ENCODE measurements at regions of chr19 and their contacts with region 1.

Region 1: GRCh38 chr19:46661020-46661731 is at the start of gene DACT3:
- DNase-seq: peak; percentile 100
- ATAC-seq: peak; percentile 92 to 94
- H3K4me3 ChIP-seq: peak within 1 kb of the TSS; percentile 61 to 79 (median 71)
- H3K27ac ChIP-seq: peak within 1 kb of the TSS; percentile 76 to 86 (median 79)
- H3K4me1 ChIP-seq: peaks cover 17 to 18% of the 10 kb centered on the region in 2 donors
- H3K27me3 ChIP-seq: peaks cover 14 to 20% (median 16%) of the 10 kb centered on the region in 3 donors
- CTCF ChIP-seq: no peak
- POLR2A ChIP-seq: no peak
- total RNA-seq, gene DACT3: 0.26 to 1.0 (median 0.39) TPM

Region 2: GRCh38 chr19:46529622-46530462 is 131.3 kb before region 1 on chr19:
- in situ Hi-C with region 1: loop called in 1 of 4 experiments (anchors 10 kb)
- intact Hi-C with region 1: no loop called
- DNase-seq: peak; percentile 34 to 47
- ATAC-seq: peak; percentile 30 to 54
- H3K4me3 ChIP-seq: no peak overlapping the region
- H3K27ac ChIP-seq: no peak overlapping the region
- H3K4me1 ChIP-seq: no peaks in the 10 kb centered on the region
- H3K27me3 ChIP-seq: peaks cover 11 to 19% (median 11%) of the 10 kb centered on the region in 3 donors
- CTCF ChIP-seq: peak; percentile 77 to 86 (median 83)
- POLR2A ChIP-seq: no peak

Region 3: DNA sequence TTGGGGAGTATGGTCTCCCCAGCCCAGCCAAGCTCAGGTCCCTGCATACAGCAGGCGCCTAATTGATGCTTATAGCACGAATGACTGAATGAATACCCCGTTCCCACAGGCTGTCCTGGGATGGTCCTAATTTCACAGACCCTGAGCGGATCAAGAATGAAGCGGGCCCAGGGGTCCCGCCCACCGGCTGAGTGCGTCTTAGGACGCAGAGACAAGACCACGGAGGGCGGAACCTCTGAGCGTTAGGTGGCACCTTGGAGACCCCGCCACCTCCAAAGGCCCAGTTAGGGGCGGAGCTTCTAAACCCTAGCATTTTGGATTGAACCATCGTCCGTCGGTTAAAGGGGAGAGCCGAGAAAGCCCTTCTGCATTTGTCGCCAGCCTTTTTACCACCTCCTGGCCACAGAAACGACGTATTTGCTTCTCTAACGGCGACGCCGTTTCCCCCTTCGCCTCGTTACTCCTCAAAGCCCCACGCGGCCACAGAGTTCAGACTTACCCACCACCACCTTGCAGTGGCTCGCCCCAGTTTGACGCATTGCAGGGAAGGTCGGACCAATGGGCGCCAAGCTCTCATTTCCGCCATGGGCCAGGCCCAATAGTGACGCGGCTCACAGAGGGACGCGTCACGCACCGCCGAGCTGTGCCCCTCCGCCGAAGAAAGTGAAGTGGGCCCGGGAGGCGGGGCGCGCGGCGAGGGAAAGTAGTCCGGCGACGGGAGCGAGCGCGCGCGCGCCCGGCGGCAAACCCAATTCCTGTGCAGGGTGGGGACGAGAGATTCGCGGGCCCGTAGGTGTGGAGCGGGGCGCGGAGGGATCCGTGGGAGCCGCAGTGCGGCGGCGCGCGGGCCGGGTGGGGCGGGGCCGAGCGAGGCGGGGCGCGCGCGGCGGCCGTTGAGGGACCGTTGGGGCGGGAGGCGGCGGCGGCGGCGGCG is 60.5 kb before region 1 on chr19:
- in situ Hi-C with region 1: no loop called
- intact Hi-C with region 1: loop called (anchors 1 kb)
- DNase-seq: peak; percentile 94 to 97
- ATAC-seq: peak; percentile 92 to 95
- H3K4me3 ChIP-seq: peak overlapping the region; percentile 90 to 99 (median 94)
- H3K27ac ChIP-seq: peak overlapping the region; percentile 86 to 98 (median 96)
- H3K4me1 ChIP-seq: peaks cover 35 to 41% of the 10 kb centered on the region in 2 donors
- H3K27me3 ChIP-seq: no peaks in the 10 kb centered on the region
- CTCF ChIP-seq: peak in 1 of 5 experiments; percentile 49
- POLR2A ChIP-seq: peak; percentile 7 to 24

Region 4: GRCh38 chr19:46614114-46614722 is 47.0 kb before region 1 on chr19:
- in situ Hi-C with region 1: loop called (anchors 5 to 10 kb)
- intact Hi-C with region 1: loop called (anchors 1 kb)
- DNase-seq: peak; percentile 47 to 73
- ATAC-seq: peak; percentile 72 to 76
- H3K4me3 ChIP-seq: no peak overlapping the region
- H3K27ac ChIP-seq: no peak overlapping the region
- H3K4me1 ChIP-seq: peaks cover 12 to 23% of the 10 kb centered on the region in 2 donors
- H3K27me3 ChIP-seq: no peaks in the 10 kb centered on the region
- CTCF ChIP-seq: peak; percentile 83 to 89 (median 87)
- POLR2A ChIP-seq: no peak

Region 5: DNA sequence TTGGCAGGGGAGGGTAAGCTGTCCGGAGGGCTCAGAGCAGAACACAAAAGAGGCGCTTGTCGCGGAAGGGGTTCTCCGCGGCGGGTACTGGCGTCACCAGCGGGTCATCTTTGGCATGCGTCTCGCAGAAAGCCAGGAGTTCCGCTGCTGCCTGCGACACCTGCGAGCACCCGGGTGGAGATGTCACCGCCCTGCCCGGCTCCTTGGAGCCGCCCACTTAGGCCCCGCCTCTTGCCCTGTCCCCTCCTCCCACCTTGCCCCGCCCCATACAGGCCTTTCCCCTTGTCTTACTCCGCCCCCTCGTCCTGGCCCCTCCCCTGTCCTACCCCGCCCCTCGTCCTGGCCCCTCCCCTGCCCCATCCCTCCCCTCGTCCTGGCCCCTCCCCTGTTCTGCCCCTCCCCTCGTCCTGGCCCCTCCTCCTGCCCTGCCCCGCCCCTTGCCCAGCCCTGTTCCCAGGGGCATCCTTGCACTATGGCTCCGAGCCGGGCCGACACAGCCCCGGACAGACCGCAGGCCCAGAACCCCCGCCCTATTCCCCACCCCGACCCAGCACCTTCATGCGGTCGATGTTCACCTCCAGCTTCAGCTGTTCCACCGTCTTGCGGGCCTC is 27.0 kb before region 1 on chr19:
- in situ Hi-C with region 1: no loop called
- intact Hi-C with region 1: loop called (anchors 1 kb)
- DNase-seq: peak; percentile 64 to 83
- ATAC-seq: peak; percentile 70 to 92
- H3K4me3 ChIP-seq: peak overlapping the region in 3 of 4 donors; percentile 39 to 60 (median 43)
- H3K27ac ChIP-seq: no peak overlapping the region
- H3K4me1 ChIP-seq: peaks cover 12 to 17% of the 10 kb centered on the region in 2 donors
- H3K27me3 ChIP-seq: peaks cover 32 to 36% (median 33%) of the 10 kb centered on the region in 3 donors
- CTCF ChIP-seq: no peak
- POLR2A ChIP-seq: no peak

Region 6: DNA sequence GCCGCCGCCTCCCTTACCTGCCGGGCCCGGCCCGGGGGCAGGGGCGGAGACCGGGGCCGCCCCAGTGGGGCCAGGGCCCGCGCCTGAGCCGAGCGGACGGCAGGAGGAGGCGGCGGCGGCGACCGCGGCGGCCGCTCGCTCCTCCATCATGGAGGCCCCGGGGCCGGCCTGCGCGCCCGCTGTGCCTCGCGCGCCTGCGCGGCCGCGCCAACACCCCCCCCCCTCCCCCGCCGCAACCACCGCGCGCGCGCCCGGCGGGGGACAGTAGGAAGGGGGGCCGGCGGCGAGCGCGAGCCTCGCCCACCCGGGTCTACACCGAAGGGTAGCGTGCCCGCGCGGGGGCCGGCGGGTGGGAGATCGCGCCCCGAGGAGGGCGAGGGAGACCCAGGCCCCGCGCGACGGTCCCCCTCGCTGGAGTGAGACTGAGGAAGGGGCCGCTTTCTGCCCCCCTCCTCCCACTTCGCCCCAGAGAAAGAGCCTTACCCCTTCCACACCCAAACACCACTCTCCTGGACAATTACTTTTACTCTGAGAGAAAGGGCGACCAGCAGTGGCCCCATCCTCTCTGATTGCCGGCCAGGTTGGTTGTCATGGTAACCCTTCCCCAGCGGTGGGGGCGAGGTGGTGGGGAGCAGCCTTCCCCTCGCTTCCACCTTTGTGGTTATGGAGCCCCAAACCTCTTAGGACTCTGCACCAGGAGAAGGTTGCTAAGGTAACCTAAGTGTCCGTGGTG is 85.3 kb after region 1 on chr19 and contains the start of gene STRN4:
- in situ Hi-C with region 1: no loop called
- intact Hi-C with region 1: loop called (anchors 1 kb)
- DNase-seq: no peak
- ATAC-seq: peak; percentile 74 to 78
- H3K4me3 ChIP-seq: peak within 1 kb of the TSS; percentile 87 to 100 (median 92)
- H3K27ac ChIP-seq: peak within 1 kb of the TSS; percentile 90 to 98 (median 96)
- H3K4me1 ChIP-seq: peaks cover 25 to 51% of the 10 kb centered on the region in 2 donors
- H3K27me3 ChIP-seq: no peaks in the 10 kb centered on the region
- CTCF ChIP-seq: no peak
- POLR2A ChIP-seq: peak; percentile 82 to 93
- total RNA-seq, gene STRN4: 45.5 to 75.7 (median 57.9) TPM

Region 7: GRCh38 chr19:46756544-46756888 is 95.3 kb after region 1 on chr19:
- in situ Hi-C with region 1: no loop called
- intact Hi-C with region 1: no loop called
- DNase-seq: no peak
- ATAC-seq: no peak
- H3K4me3 ChIP-seq: no peak overlapping the region
- H3K27ac ChIP-seq: no peak overlapping the region
- H3K4me1 ChIP-seq: peaks cover 0 to 12% of the 10 kb centered on the region in 2 donors
- H3K27me3 ChIP-seq: no peaks in the 10 kb centered on the region
- CTCF ChIP-seq: no peak
- POLR2A ChIP-seq: no peak